ENCODE measurements at regions of chr3 and their contacts with region 1.

Region 1: GRCh38 chr3:179147873-179148615 is at the start of gene PIK3CA:
- DNase-seq: peak; percentile 96
- H3K4me3 Mint-ChIP-seq: peak within 1 kb of the TSS; percentile 89
- H3K27ac Mint-ChIP-seq: peak within 1 kb of the TSS; percentile 88
- H3K4me1 Mint-ChIP-seq: peaks cover 38% of the 10 kb centered on the region
- H3K27me3 Mint-ChIP-seq: peaks cover 4% of the 10 kb centered on the region
- total RNA-seq, gene PIK3CA: 16.7 to 19.1 TPM

Region 2: GRCh38 chr3:177359593-177360357 is 1788.3 kb before region 1 on chr3:
- CTCF ChIA-PET with region 1: no interaction called
- POLR2A ChIA-PET with region 1: no interaction called
- intact Hi-C with region 1: loop called (anchors 5 kb)
- DNase-seq: peak; percentile 97
- H3K4me3 Mint-ChIP-seq: peak overlapping the region; percentile 70
- H3K27ac Mint-ChIP-seq: peak overlapping the region; percentile 94
- H3K4me1 Mint-ChIP-seq: peaks cover 55% of the 10 kb centered on the region
- H3K27me3 Mint-ChIP-seq: no peaks in the 10 kb centered on the region

Region 3: DNA sequence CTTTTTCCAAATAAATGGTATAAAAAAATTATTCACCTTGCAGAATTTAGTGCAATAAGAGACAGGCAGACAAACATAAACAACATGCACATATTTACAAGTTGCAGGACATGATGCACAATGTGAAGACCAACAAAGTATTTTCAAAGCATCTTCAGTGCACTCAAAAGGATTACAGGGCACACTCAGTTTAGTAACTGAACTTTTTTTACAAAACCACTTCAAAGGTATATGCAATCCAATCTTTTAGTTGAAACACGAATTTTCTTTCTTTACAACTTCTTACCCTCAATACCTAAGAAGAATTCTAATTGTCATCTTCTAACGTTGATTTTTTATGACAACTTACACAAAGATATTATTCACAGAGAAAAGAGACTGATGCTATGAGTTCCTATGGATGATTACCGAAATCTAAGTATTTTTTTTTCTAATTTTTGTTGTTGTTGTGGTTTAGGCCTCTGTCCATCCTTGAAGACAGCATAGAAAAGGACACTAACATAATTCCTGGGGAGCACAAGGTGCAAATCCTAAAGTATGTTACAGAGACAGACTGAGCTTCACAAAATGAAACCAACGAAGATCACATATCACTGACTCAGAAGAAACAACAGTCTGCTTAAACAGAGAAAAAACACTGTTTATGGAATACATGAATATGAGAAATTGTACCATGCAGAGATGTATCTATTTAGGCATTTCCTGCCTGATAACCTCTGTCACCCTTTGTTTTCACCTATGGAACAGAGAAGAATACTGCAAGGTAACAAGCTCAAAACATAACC is 126.7 kb before region 1 on chr3:
- CTCF ChIA-PET with region 1: interaction called, 9 read pairs
- POLR2A ChIA-PET with region 1: interaction called, 3 read pairs
- intact Hi-C with region 1: loop called (anchors 1 kb)
- DNase-seq: no peak
- H3K4me3 Mint-ChIP-seq: peak overlapping the region; percentile 37
- H3K27ac Mint-ChIP-seq: peak overlapping the region; percentile 49
- H3K4me1 Mint-ChIP-seq: peaks cover 35% of the 10 kb centered on the region
- H3K27me3 Mint-ChIP-seq: no peaks in the 10 kb centered on the region

Region 4: DNA sequence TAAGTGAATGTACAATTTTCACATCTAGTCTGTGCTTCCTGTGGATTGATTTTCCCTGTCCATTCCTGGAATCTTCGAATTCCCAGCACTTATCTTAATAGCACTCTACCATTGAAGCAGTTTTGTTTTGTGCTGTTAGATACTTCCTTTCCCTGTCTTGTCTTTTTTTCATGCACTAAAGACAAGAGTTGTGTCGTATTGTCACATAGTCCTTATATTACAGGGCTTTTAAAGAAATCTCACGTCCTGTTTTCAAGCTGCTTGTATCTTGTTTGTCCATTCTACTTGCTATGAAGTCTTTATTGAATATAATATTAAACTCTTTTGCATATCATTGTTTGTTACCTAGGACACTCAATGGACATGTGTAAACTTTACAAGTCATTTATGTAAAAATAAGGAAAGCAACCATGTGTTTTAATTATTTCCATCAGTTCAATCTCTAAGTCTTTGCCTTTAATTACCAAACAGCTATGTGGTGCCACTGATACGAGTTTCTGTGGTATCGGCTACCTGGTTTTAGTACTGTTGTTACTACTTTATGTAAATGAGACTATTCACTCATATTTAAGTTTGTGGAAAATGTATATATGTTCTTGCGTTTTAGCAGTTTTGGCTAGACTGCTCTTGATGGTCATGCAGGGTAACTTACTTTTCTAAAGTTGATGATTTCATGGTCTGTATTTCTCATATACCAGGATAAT is 10.4 kb after region 1 on chr3:
- CTCF ChIA-PET with region 1: interaction called, 6 read pairs
- POLR2A ChIA-PET with region 1: interaction called, 6 read pairs
- intact Hi-C with region 1: loop called (anchors 1 kb)
- DNase-seq: no peak
- H3K4me3 Mint-ChIP-seq: no peak overlapping the region
- H3K27ac Mint-ChIP-seq: no peak overlapping the region
- H3K4me1 Mint-ChIP-seq: peaks cover 54% of the 10 kb centered on the region
- H3K27me3 Mint-ChIP-seq: no peaks in the 10 kb centered on the region

Region 5: GRCh38 chr3:179260949-179261765 is 113.1 kb after region 1 on chr3:
- CTCF ChIA-PET with region 1: interaction called, 3 read pairs
- POLR2A ChIA-PET with region 1: no interaction called
- intact Hi-C with region 1: loop called (anchors 1 kb)
- DNase-seq: peak; percentile 77
- H3K4me3 Mint-ChIP-seq: peak overlapping the region; percentile 67
- H3K27ac Mint-ChIP-seq: no peak overlapping the region
- H3K4me1 Mint-ChIP-seq: peaks cover 9% of the 10 kb centered on the region
- H3K27me3 Mint-ChIP-seq: no peaks in the 10 kb centered on the region

Region 6: DNA sequence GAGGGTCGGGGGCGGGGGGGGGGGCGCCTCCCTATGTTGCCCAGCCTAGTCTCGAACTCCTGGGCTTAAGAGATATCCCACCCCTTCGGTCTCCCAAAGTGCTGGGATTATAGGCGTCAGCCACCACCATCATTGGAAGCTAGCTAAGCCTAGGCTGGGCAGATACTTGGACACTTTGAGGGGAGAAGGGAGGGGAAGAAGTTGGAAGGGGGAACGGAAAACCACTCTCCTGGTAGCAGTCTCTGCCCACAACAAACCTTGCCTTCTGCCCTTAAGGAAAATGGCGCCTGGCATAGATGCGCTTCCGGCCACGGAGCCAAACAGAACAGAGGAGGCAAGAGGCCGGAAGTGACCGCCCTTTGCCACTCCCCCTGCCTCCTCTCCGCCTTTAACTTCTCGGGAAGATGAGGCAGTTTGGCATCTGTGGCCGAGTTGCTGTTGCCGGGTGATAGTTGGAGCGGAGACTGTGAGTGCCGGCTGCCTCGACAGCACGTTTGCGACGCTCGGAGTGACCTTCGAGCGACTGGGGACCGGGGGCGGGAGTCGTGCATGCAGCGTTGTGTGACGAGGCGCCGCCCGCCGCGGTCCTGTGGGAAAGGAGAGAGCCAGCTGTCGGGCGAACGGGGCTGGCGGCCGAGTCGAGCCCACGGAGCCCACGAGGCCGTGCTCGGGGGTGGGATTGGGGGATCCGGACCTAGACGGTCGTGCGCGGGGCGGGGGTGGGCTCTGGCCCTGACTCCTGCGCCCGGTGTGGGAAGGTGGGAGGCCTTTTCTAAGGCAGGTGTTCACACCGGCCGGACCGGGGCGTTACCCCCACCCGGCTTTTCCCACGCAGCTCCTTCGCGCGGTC is 199.5 kb after region 1 on chr3 and contains the start of gene MFN1:
- CTCF ChIA-PET with region 1: no interaction called
- POLR2A ChIA-PET with region 1: no interaction called
- intact Hi-C with region 1: loop called (anchors 1 kb)
- DNase-seq: peak; percentile 94
- H3K4me3 Mint-ChIP-seq: peak within 1 kb of the TSS; percentile 98
- H3K27ac Mint-ChIP-seq: peak within 1 kb of the TSS; percentile 94
- H3K4me1 Mint-ChIP-seq: peaks cover 23% of the 10 kb centered on the region
- H3K27me3 Mint-ChIP-seq: no peaks in the 10 kb centered on the region
- total RNA-seq, gene MFN1: 31.1 to 31.3 TPM

Measured in activated CD4-positive, alpha-beta memory T cell treated with anti-CD3 and anti-CD28 coated beads for 36 hours (primary cell).